K562 (cell line): ENCODE measurements at regions of chr11 and their contacts with region 1.

Region 1: GRCh38 chr11:120527111-120527761 is 15.7 kb downstream of the GRIK4 start:
- DNase-seq: no peak
- ATAC-seq: no peak
- H3K4me3 ChIP-seq: no peak overlapping the region
- H3K27ac ChIP-seq: no peak overlapping the region
- H3K4me1 ChIP-seq: no peaks in the 10 kb centered on the region
- H3K27me3 ChIP-seq: peaks cover 42 to 89% of the 10 kb centered on the region in 2 experiments; a peak in 4 of 5 replicates
- CTCF ChIP-seq: no peak
- EP300 ChIP-seq: no peak
- POLR2A ChIP-seq: no peak
- RAD21 ChIP-seq: no peak

Region 2: GRCh38 chr11:120688163-120688562 is 160.9 kb after region 1 on chr11:
- CTCF ChIA-PET with region 1: no interaction called
- POLR2A ChIA-PET with region 1: no interaction called
- in situ Hi-C with region 1: loop called (anchors 5 kb)
- intact Hi-C with region 1: no loop called
- DNase-seq: no peak
- ATAC-seq: no peak
- H3K4me3 ChIP-seq: no peak overlapping the region
- H3K27ac ChIP-seq: no peak overlapping the region
- H3K4me1 ChIP-seq: 0 out of 5 replicates have a peak, but pooled peaks cover 0 to 4% of the 10 kb centered on the region in 2 experiments
- H3K27me3 ChIP-seq: peaks cover 0 to 14% of the 10 kb centered on the region in 2 experiments; a peak in 2 of 5 replicates
- CTCF ChIP-seq: no peak
- EP300 ChIP-seq: no peak
- POLR2A ChIP-seq: no peak
- RAD21 ChIP-seq: no peak

Region 3: GRCh38 chr11:121132196-121132976 is 605.1 kb after region 1 on chr11:
- CTCF ChIA-PET with region 1: no interaction called
- POLR2A ChIA-PET with region 1: no interaction called
- in situ Hi-C with region 1: no loop called
- intact Hi-C with region 1: no loop called
- DNase-seq: peak in 2 of 4 experiments; percentile 13 to 17
- ATAC-seq: no peak
- H3K4me3 ChIP-seq: no peak overlapping the region
- H3K27ac ChIP-seq: no peak overlapping the region
- H3K4me1 ChIP-seq: peaks cover 0 to 5% of the 10 kb centered on the region in 2 experiments; a peak in 1 of 5 replicates
- H3K27me3 ChIP-seq: peaks cover 27 to 50% of the 10 kb centered on the region in 2 experiments
- CTCF ChIP-seq: no peak
- EP300 ChIP-seq: no peak
- POLR2A ChIP-seq: no peak
- RAD21 ChIP-seq: no peak